IMR-90 (cell line): ENCODE measurements at regions of chr2 and their contacts with region 1.

Region 1: GRCh38 chr2:225100856-225101294 is 58.6 kb upstream of the DOCK10 start:
- DNase-seq: peak; percentile 97
- ATAC-seq: peak; percentile 60
- H3K4me3 ChIP-seq: no peak overlapping the region
- H3K27ac ChIP-seq: peak overlapping the region; percentile 97
- H3K4me1 ChIP-seq: peaks cover 4% of the 10 kb centered on the region
- H3K27me3 ChIP-seq: no peaks in the 10 kb centered on the region
- CTCF ChIP-seq: no peak
- POLR2A ChIP-seq: no peak
- RAD21 ChIP-seq: no peak

Region 2: DNA sequence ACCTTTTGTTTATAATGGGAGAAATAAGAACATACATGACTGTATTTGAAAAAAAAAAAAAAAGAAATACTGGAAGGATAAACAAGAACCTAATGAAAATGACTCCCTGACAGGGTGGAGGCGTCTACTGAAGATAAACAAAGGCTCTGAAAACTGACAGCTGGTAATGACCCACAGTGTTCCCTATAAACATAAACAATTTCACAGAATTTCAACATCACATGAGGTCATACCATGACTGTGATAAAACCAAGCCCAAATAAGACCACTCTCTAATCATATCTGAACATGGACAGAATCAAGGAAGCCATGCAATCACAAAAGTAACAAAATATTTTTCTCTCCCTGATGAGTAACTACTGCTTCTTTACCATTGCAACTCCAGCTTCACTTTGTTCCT is 858.3 kb before region 1 on chr2:
- CTCF ChIA-PET with region 1: no interaction called
- POLR2A ChIA-PET with region 1: interaction called, 11 read pairs
- dilution Hi-C with region 1: no loop called
- in situ Hi-C with region 1: no loop called
- intact Hi-C with region 1: no loop called
- DNase-seq: peak; percentile 24
- ATAC-seq: no peak
- H3K4me3 ChIP-seq: no peak overlapping the region
- H3K27ac ChIP-seq: no peak overlapping the region
- H3K4me1 ChIP-seq: no peaks in the 10 kb centered on the region
- H3K27me3 ChIP-seq: peaks cover 6% of the 10 kb centered on the region; the same call in 1 of the 2 replicates
- CTCF ChIP-seq: no peak
- POLR2A ChIP-seq: no peak
- RAD21 ChIP-seq: no peak

Region 3: DNA sequence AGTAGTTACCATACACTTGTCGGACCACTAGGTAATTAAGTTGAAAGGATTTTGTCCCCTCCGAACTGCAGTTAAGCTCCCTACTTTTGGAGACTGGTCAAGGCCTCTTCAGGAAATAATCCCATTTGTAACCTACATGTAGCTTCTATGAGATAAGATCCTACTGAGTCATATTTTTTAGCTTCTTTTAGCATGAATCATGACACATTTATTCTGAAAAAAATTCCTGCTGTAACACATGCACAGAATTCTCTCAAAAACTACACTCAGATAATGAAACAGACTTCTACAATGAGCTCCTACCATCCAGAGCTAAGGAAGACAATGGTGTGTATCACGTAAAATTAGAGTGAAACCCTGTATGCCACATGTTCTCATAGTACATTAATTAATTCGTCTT is 284.1 kb before region 1 on chr2:
- CTCF ChIA-PET with region 1: no interaction called
- POLR2A ChIA-PET with region 1: no interaction called
- dilution Hi-C with region 1: no loop called
- in situ Hi-C with region 1: no loop called
- intact Hi-C with region 1: loop called (anchors 10 kb)
- DNase-seq: peak; percentile 89
- ATAC-seq: peak; percentile 80
- H3K4me3 ChIP-seq: no peak overlapping the region
- H3K27ac ChIP-seq: peak overlapping the region; percentile 30
- H3K4me1 ChIP-seq: peaks cover 12% of the 10 kb centered on the region
- H3K27me3 ChIP-seq: no peaks in the 10 kb centered on the region
- CTCF ChIP-seq: no peak
- POLR2A ChIP-seq: no peak
- RAD21 ChIP-seq: no peak

Region 4: GRCh38 chr2:224885836-224886547 is 214.9 kb before region 1 on chr2:
- CTCF ChIA-PET with region 1: no interaction called
- POLR2A ChIA-PET with region 1: no interaction called
- dilution Hi-C with region 1: no loop called
- in situ Hi-C with region 1: no loop called
- intact Hi-C with region 1: loop called (anchors 5 kb)
- DNase-seq: peak; percentile 93
- ATAC-seq: peak; percentile 63
- H3K4me3 ChIP-seq: no peak overlapping the region
- H3K27ac ChIP-seq: peak overlapping the region; percentile 81
- H3K4me1 ChIP-seq: peaks cover 25% of the 10 kb centered on the region
- H3K27me3 ChIP-seq: no peaks in the 10 kb centered on the region
- CTCF ChIP-seq: no peak
- POLR2A ChIP-seq: no peak
- RAD21 ChIP-seq: no peak

Region 5: GRCh38 chr2:225137971-225138370 is 37.1 kb after region 1 on chr2:
- CTCF ChIA-PET with region 1: no interaction called
- POLR2A ChIA-PET with region 1: no interaction called
- dilution Hi-C with region 1: no loop called
- in situ Hi-C with region 1: no loop called
- intact Hi-C with region 1: no loop called
- DNase-seq: peak; percentile 40
- ATAC-seq: no peak
- H3K4me3 ChIP-seq: no peak overlapping the region
- H3K27ac ChIP-seq: no peak overlapping the region
- H3K4me1 ChIP-seq: no peaks in the 10 kb centered on the region
- H3K27me3 ChIP-seq: no peaks in the 10 kb centered on the region
- CTCF ChIP-seq: no peak
- POLR2A ChIP-seq: no peak
- RAD21 ChIP-seq: no peak